Right cardiac atrium (tissue), 5 donors: ENCODE measurements at regions of chr12 and their contacts with region 1.

Region 1: GRCh38 chr12:70733385-70733784 is 96.2 kb upstream of the PTPRB start:
- DNase-seq: no peak
- ATAC-seq: peak; percentile 76 to 81
- H3K4me3 ChIP-seq: no peak overlapping the region
- H3K27ac ChIP-seq: no peak overlapping the region
- H3K4me1 ChIP-seq: no peaks in the 10 kb centered on the region
- H3K27me3 ChIP-seq: no peaks in the 10 kb centered on the region

Region 2: GRCh38 chr12:69879041-69879960 is 854.1 kb before region 1 on chr12:
- intact Hi-C with region 1: loop called in 2 of 4 experiments (anchors 5 to 10 kb)
- DNase-seq: peak; percentile 67 to 87 (median 76)
- ATAC-seq: peak; percentile 92 to 95
- H3K4me3 ChIP-seq: peak overlapping the region; percentile 46
- H3K27ac ChIP-seq: no peak overlapping the region
- H3K4me1 ChIP-seq: peaks cover 1% of the 10 kb centered on the region
- H3K27me3 ChIP-seq: no peaks in the 10 kb centered on the region

Region 3: GRCh38 chr12:70849265-70849960 is 116.0 kb after region 1 on chr12:
- intact Hi-C with region 1: loop called in 1 of 4 experiments (anchors 5 kb)
- DNase-seq: no peak
- ATAC-seq: peak; percentile 51 to 67
- H3K4me3 ChIP-seq: no peak overlapping the region
- H3K27ac ChIP-seq: no peak overlapping the region
- H3K4me1 ChIP-seq: no peaks in the 10 kb centered on the region
- H3K27me3 ChIP-seq: no peaks in the 10 kb centered on the region